Activated naive CD4-positive, alpha-beta T cell treated with anti-CD3 and anti-CD28 coated beads for 36 hours (primary cell): ENCODE measurements at regions of chr10 and their contacts with region 1.

Region 1: GRCh38 chr10:73730153-73730906 is 13.8 kb upstream of the SEC24C start:
- DNase-seq: peak; percentile 95
- H3K4me3 Mint-ChIP-seq: peak overlapping the region; percentile 91
- H3K27ac Mint-ChIP-seq: peak overlapping the region; percentile 97
- H3K4me1 Mint-ChIP-seq: peaks cover 16% of the 10 kb centered on the region
- H3K27me3 Mint-ChIP-seq: no peaks in the 10 kb centered on the region

Region 2: GRCh38 chr10:73485320-73485719 is 245.0 kb before region 1 on chr10:
- CTCF ChIA-PET with region 1: no interaction called
- intact Hi-C with region 1: no loop called
- DNase-seq: no peak
- H3K4me3 Mint-ChIP-seq: no peak overlapping the region
- H3K27ac Mint-ChIP-seq: no peak overlapping the region
- H3K4me1 Mint-ChIP-seq: peaks cover 33% of the 10 kb centered on the region
- H3K27me3 Mint-ChIP-seq: no peaks in the 10 kb centered on the region

Region 3: GRCh38 chr10:73759512-73760115 is 29.3 kb after region 1 on chr10:
- CTCF ChIA-PET with region 1: interaction called, 3 read pairs
- intact Hi-C with region 1: loop called (anchors 1 kb)
- DNase-seq: peak; percentile 73
- H3K4me3 Mint-ChIP-seq: no peak overlapping the region
- H3K27ac Mint-ChIP-seq: peak overlapping the region; percentile 82
- H3K4me1 Mint-ChIP-seq: peaks cover 57% of the 10 kb centered on the region
- H3K27me3 Mint-ChIP-seq: no peaks in the 10 kb centered on the region

Region 4: DNA sequence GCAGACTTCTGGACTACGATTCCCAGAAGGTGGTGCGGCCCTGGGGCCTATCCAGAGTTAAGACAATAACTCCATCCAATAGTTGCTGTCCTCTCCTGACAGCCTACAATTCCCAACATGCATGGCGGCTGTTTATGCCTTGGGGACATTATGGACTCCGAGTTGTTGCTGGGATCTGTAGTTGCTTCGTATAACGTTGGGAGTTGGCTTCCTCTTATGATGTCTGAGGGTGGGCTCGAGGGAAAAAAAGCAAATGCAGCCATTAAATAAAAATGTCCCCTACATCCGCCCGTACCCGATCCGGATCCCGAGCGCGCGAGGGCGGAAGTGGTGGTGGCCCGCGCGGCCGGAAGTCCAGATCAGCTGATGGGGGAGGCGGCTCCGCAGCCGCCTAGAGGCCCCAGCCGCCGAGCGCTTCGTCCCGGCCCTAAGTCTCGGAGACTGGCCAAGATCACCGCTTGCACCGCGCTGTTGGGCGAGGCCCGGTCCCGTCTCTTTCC is 54.9 kb after region 1 on chr10 and contains the start of gene ZSWIM8:
- CTCF ChIA-PET with region 1: no interaction called
- intact Hi-C with region 1: loop called (anchors 1 kb)
- DNase-seq: peak; percentile 89
- H3K4me3 Mint-ChIP-seq: peak within 1 kb of the TSS; percentile 98
- H3K27ac Mint-ChIP-seq: peak within 1 kb of the TSS; percentile 97
- H3K4me1 Mint-ChIP-seq: peaks cover 42% of the 10 kb centered on the region
- H3K27me3 Mint-ChIP-seq: no peaks in the 10 kb centered on the region
- total RNA-seq, gene ZSWIM8: 25.8 to 26.7 TPM

Region 5: GRCh38 chr10:74406006-74406405 is 675.7 kb after region 1 on chr10:
- CTCF ChIA-PET with region 1: no interaction called
- intact Hi-C with region 1: no loop called
- DNase-seq: no peak
- H3K4me3 Mint-ChIP-seq: no peak overlapping the region
- H3K27ac Mint-ChIP-seq: no peak overlapping the region
- H3K4me1 Mint-ChIP-seq: peaks cover 3% of the 10 kb centered on the region
- H3K27me3 Mint-ChIP-seq: no peaks in the 10 kb centered on the region

Region 6: DNA sequence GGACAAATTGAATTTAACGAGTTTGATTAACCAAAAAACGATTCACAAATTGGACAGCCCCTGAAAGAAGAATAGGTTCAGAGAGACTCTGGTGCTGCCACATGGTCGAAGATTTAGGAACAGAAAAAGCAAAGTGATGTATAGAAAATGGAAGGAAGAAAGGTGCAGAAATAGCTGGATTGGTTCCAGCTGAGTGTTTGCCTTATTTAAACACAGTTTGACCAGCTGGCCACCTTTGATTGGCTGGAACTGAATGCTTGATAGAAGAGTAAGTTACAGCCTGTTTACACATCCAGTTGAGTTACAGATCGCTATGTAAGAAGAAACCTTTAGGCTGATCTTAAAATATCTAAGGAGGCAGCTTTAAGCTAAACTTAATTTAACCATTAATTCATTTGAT is 1055.8 kb after region 1 on chr10:
- CTCF ChIA-PET with region 1: no interaction called
- intact Hi-C with region 1: no loop called
- DNase-seq: no peak
- H3K4me3 Mint-ChIP-seq: no peak overlapping the region
- H3K27ac Mint-ChIP-seq: no peak overlapping the region
- H3K4me1 Mint-ChIP-seq: no peaks in the 10 kb centered on the region
- H3K27me3 Mint-ChIP-seq: no peaks in the 10 kb centered on the region